ENCODE measurements at regions of chr1 and their contacts with region 1.

Region 1: DNA sequence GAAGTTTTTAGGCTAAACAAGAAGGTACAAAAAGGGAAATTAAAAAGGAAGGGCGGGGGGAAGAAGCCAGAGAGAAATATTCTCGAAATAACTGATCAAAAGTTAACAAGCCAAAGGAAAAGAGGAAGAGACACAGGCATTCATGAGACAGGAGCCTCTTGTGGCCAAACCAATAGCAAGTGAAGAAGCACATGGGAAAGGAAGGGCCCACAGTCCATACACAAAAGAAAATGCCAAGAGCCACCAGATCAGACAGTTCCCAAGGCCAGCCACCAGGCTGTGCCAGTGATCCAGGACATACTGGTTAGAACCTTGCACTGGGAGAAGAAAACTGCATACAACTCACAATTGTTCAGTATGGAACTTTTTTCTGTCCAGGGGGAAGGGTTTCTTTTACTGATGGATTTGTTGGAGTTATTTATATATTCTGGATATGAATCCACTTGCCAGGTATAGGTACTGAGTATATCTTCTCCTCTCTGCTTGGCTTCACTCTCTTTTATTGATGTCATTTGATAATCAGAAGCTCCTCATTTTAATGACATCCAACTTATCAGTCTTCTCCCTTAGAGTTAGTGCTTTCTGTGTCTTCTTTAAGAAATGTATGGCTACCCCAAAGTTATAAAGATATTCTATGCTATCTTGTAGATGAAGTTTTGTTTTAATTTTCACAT is 76.8 kb downstream of the CD46 start:
- DNase-seq: no peak
- CTCF ChIP-seq: peak; percentile 87

Region 2: DNA sequence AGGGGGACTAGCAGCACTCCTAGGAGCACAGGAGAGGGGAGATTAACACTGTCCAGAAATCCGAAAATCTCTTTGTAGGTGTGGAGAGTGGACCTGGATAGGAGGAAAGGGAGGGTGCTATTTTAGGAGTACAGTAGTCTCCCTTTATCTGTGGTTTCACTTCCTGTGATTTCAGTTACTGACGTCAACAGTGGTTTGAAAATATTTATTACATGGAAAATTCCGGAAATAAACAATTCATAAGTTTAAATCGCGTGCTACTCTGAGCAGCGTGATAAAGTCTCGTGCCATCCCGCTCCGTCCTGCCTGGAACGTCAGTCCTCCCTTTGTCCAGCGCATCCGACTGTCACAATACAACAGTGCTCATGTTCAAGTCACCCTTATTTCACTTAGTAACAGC is 937.9 kb before region 1 on chr1:
- in situ Hi-C with region 1: no loop called
- DNase-seq: no peak
- CTCF ChIP-seq: no peak

Region 3: GRCh38 chr1:207873055-207873890 is 44.7 kb after region 1 on chr1:
- in situ Hi-C with region 1: loop called (anchors 5 kb)
- DNase-seq: peak; percentile 36
- CTCF ChIP-seq: no peak

Measured in GM13977 (cell line).